ENCODE measurements at regions of chr5 and their contacts with region 1.

Region 1: DNA sequence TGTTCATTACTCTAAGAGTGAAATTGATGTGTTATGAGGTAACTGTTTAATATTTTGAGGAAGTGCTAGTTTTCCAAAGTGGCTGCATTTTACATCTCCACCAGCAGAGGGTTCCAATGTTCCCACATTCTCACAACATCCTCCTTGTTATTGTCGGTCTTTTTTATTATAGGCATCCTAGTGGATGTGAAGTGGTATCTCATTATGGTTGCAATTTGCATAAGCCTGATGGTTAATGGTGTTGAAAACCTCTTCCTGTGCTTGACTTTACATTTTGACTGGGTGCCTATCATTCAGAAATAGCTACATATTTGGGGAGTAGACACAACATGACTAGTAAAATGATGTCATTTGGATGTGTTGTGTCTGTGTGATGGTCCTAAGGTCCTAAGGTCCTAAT is 143.6 kb downstream of the MRPS30 start:
- DNase-seq: peak; percentile 51
- ATAC-seq: peak; percentile 74
- H3K4me3 ChIP-seq: no peak overlapping the region
- H3K27ac ChIP-seq: no peak overlapping the region
- H3K4me1 ChIP-seq: no peaks in the 10 kb centered on the region
- H3K27me3 ChIP-seq: no peaks in the 10 kb centered on the region
- CTCF ChIP-seq: peak; percentile 49 to 77 (median 76); a peak in 5 of 6 replicates
- POLR2A ChIP-seq: no peak
- RAD21 ChIP-seq: peak; percentile 57

Region 2: DNA sequence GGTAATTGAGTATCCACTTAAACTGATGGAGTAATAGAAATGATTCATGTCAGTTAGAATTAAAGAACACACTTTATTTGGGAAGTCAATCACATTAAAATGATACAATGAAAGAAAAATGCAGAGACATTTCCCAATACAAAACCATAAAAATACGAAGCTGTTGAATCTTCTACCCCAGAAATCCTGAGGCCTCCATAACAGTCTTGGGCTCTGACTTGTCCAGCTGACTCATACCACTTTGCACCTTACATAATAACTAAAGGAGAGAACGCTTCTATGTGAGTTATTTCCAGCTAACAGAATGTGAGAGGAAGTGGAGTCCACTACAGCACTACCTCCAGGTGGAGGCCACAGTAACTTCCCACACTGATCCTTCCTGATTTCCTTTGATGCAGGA is 161.3 kb after region 1 on chr5:
- CTCF ChIA-PET with region 1: no interaction called
- POLR2A ChIA-PET with region 1: no interaction called
- RAD21 ChIA-PET with region 1: no interaction called
- intact Hi-C with region 1: no loop called
- DNase-seq: no peak
- ATAC-seq: no peak
- H3K4me3 ChIP-seq: no peak overlapping the region
- H3K27ac ChIP-seq: no peak overlapping the region
- H3K4me1 ChIP-seq: peaks cover 0 to 4% of the 10 kb centered on the region in 2 experiments; a peak in 1 of 4 replicates
- H3K27me3 ChIP-seq: no peaks in the 10 kb centered on the region
- CTCF ChIP-seq: no peak
- POLR2A ChIP-seq: no peak
- RAD21 ChIP-seq: no peak

Region 3: GRCh38 chr5:45132972-45133371 is 180.6 kb after region 1 on chr5:
- CTCF ChIA-PET with region 1: no interaction called
- POLR2A ChIA-PET with region 1: no interaction called
- RAD21 ChIA-PET with region 1: no interaction called
- intact Hi-C with region 1: no loop called
- DNase-seq: no peak
- ATAC-seq: no peak
- H3K4me3 ChIP-seq: no peak overlapping the region
- H3K27ac ChIP-seq: no peak overlapping the region
- H3K4me1 ChIP-seq: no peaks in the 10 kb centered on the region
- H3K27me3 ChIP-seq: no peaks in the 10 kb centered on the region
- CTCF ChIP-seq: no peak
- POLR2A ChIP-seq: no peak
- RAD21 ChIP-seq: no peak

Region 4: DNA sequence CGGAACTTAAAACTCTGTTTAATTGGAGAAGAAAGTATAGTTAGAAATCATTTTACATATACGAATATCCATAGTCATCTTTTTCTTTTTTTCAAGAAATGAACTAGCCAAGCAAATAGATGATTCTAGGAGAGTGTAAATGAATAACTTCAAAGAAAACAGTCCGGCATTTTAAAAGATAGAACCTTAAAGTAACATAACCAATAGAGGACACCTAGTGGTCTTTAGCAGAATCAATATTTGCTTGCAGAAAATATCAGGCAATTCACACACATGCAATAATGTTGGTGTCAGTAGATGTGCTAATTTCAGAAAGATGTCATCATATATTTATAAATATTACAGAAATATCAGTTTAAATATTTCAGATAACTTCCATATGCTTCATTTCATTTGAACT is 686.7 kb after region 1 on chr5:
- CTCF ChIA-PET with region 1: no interaction called
- POLR2A ChIA-PET with region 1: no interaction called
- RAD21 ChIA-PET with region 1: no interaction called
- intact Hi-C with region 1: loop called (anchors 10 kb)
- DNase-seq: peak; percentile 8
- ATAC-seq: no peak
- H3K4me3 ChIP-seq: no peak overlapping the region
- H3K27ac ChIP-seq: no peak overlapping the region
- H3K4me1 ChIP-seq: no peaks in the 10 kb centered on the region
- H3K27me3 ChIP-seq: no peaks in the 10 kb centered on the region
- CTCF ChIP-seq: peak; percentile 33 to 58 (median 42); a peak in 4 of 6 replicates
- POLR2A ChIP-seq: no peak
- RAD21 ChIP-seq: peak; percentile 48; the same call in 1 of the 2 replicates

Region 5: DNA sequence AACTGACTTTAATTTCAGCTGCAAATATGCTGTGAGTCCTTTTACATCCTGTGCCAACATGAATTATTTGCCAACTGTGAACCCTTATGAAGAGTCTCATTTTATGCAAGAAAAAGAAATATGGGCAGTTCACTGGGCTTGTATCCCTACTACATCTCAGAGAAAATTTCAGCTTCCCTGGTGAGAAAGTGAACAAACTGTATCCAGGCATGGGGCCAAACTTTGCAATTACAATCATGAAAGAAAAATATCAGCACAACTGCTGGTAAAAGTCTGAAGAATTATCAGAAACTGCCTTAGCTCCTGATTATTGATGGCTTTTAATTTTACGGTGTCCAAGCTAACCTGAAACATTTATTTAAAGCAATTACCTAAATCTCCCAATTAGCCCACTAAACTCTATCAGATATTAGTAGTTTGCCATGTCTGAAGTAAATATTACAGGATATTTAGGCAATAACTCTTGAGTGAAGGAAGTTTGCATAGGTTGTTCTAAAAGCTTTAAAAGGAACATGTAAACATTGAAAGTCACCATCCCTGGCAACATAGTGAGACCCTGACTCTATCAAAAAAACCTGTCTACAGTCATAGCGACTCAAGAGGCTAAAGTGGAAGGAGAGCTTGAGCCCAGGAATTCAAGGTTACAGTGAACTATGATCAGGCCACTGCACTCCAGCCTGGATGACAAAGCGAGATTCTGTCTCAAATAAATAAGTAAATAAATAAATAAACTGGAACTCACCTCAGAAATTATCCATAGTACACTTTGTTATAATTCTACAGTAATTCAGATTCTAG is 827.7 kb after region 1 on chr5:
- CTCF ChIA-PET with region 1: interaction called, 3 read pairs
- POLR2A ChIA-PET with region 1: no interaction called
- RAD21 ChIA-PET with region 1: no interaction called
- intact Hi-C with region 1: loop called (anchors 5 kb)
- DNase-seq: no peak
- ATAC-seq: no peak
- H3K4me3 ChIP-seq: no peak overlapping the region
- H3K27ac ChIP-seq: no peak overlapping the region
- H3K4me1 ChIP-seq: no peaks in the 10 kb centered on the region
- H3K27me3 ChIP-seq: no peaks in the 10 kb centered on the region
- CTCF ChIP-seq: no peak
- POLR2A ChIP-seq: no peak
- RAD21 ChIP-seq: no peak